Vagina (tissue), 2 donors: ENCODE measurements at regions of chr17 and their contacts with region 1.

Region 1: DNA sequence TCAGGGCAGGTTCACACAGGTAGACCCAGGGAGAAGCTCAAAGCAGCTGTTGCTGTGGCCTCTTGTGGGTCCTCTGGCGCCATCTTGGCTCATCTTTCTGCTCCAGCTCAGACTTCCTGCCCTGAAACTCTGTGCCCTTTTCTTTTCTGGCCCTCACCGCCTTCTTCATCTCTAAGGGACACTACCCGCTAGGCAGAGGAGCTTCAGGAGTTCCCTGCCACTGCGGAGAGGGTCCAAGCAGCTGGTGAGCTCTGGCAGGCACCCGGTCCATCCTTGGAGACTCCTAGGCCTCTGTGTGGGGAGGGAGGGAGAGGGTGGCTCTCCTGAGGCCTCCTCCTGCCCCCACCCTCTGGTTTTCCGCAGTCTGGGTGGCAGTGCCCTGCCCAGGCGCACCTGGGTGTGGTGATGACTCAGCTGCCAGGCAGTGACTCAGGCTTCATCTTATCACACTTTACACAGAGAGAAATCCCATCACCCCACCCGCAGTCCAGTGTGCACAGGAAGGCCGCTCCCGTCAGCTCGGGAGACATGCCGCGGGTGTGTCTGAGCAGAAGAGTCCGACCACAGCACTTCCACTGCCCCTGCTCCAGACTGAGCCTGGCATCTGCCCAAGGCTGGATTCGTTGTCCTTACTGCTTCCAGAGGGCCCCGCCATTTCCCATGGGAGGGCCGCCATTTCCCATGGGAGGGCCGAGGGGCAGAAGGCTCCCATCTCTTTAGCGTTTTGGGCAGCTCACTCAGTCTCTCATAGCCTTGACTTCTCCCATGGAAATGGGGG is 7.3 kb downstream of the NT5C start:
- DNase-seq: no peak
- H3K4me3 ChIP-seq: no peak overlapping the region
- H3K27ac ChIP-seq: peak overlapping the region; percentile 77
- H3K4me1 ChIP-seq: peaks cover 29% of the 10 kb centered on the region
- H3K27me3 ChIP-seq: no peaks in the 10 kb centered on the region
- CTCF ChIP-seq: no peak
- POLR2A ChIP-seq: no peak

Region 2: DNA sequence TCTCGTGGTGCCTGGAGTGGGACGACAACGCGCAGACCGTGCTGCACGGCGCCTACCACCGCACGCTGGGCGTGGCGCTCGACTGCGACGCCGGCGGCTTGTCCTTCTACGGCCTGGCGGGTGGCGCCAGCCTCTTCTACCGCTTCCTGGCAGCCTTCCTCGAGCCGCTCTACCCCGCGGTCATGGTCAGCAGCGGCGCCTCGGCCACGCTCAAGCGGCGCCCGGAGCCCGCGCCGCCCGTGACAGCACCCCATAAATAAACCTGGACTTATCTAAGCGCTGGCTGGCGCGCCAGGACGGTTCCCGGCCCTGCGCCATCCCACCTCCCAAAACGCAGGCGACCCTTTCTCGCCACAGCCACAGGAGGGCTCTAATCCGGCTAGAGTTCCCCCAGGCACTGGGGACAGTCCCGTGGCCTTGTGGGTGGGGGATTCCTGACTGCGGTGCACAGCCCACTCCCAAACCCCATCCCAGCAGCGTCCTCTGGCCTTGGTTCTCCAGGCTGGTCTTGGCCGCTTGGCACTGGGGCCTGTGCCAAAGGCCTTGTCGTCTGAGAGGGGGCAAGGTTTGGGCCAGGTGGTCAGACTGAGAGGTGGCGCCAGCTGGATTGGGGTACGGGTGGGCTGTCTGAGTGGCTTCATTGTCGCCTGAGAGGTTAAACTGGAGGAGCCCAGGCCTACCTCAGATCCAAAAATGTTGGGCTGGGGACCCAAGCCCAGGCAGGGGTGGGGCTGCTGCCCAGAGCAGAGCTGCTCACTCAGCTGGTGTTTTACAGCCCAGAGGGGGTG is 46.5 kb before region 1 on chr17:
- intact Hi-C with region 1: loop called (anchors 10 kb)
- DNase-seq: peak in 1 of 2 donors; percentile 94
- H3K4me3 ChIP-seq: peak overlapping the region; percentile 46 to 48
- H3K27ac ChIP-seq: peak overlapping the region; percentile 72
- H3K4me1 ChIP-seq: peaks cover 37% of the 10 kb centered on the region
- H3K27me3 ChIP-seq: no peaks in the 10 kb centered on the region
- CTCF ChIP-seq: no peak
- POLR2A ChIP-seq: no peak

Region 3: GRCh38 chr17:75468291-75468754 is 344.1 kb after region 1 on chr17:
- intact Hi-C with region 1: no loop called
- DNase-seq: no peak
- H3K4me3 ChIP-seq: no peak overlapping the region
- H3K27ac ChIP-seq: no peak overlapping the region
- H3K4me1 ChIP-seq: peaks cover 12% of the 10 kb centered on the region
- H3K27me3 ChIP-seq: no peaks in the 10 kb centered on the region
- CTCF ChIP-seq: no peak
- POLR2A ChIP-seq: no peak

Region 4: DNA sequence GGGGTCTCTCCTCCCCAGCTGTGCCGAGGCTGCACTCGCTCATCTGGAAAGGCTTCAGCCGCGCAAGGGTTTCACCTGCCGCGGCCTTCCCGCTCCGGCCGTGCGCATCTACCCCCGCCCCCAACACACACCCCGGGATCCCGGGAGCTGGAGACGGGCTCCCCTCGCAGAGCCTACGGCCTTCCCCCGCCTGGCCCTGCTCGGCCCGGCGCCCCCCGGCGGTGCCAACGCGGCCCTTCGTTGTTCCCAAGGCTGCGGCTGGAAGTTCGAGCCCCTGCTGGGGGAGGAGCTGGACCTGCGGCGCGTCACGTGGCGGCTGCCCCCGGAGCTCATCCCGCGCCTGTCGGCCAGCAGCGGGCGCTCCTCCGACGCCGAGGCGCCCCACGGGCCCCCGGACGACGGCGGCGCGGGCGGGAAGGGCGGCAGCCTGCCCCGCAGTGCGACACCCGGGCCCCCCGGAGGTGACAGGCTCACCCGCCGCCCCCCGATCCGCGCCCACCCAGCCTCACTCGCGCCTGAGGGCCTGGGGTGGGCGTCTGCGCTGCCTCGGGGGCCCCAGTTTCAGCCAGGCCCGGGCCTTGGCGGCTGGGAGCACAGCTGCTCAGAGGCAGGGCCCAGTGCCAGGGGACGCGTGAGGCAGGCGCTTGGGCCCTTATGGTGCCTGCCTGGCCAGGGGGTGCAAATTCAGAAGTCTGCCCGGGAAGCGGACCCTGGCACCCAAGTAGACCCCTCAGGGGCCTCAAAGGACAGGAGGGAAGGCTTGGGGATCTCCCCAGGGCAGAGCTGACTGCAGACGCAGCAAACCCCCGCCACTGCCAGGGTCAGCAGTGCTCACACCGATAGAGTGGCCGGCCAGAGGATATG is 629.5 kb after region 1 on chr17:
- intact Hi-C with region 1: no loop called
- DNase-seq: no peak
- H3K4me3 ChIP-seq: peak overlapping the region; percentile 39 to 51
- H3K27ac ChIP-seq: peak overlapping the region; percentile 51
- H3K4me1 ChIP-seq: peaks cover 30% of the 10 kb centered on the region
- H3K27me3 ChIP-seq: no peaks in the 10 kb centered on the region
- CTCF ChIP-seq: peak in 1 of 3 experiments; percentile 54
- POLR2A ChIP-seq: no peak